ENCODE measurements at regions of chr3 and their contacts with region 1.

Region 1: DNA sequence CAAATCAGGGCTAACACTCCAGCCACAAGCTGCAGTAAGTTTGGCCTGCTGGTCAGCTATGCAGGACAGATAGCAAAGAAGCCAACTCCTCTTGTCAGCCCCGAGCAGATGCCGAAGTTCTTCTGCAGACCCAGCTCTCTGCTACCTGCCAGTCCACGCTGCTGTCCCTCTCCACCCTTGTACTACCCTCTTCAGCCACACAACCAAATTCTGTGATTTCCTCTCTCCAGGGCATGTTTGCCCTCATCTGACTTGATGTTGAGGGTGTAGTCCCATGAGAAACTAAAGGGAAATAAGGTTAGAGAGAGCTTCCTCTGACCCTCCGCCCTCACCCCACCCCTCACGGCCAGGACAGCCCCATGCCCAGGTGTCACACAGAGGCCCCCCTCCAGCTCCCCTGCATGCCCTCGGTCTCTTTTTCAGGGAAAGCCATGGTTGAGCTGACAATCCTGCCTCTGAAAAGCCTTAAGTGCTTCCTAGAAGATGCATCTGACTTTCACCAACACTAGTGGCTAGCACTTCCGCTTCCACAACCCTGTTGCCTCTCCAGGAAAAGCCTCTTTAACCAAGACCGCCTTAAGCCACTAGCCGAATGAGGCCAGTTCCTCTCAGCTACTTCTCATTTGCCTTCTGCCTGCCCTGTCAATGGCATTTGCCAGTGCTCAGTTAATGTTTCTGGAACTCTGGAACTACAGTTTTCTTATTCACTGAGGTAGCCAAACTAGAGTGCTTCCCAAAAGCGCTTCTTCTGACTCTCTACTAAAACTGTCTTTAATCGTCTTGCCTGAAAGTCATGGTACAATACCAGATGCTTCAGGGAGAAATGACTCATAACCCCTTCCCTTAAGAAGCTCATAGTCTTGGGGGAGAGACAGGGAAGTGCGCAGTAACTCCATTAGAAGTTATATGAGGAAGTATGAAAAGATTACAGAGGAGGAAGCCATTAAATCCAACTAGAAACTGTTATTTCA is 300.4 kb upstream of the STT3B start:
- DNase-seq: no peak
- H3K4me3 Mint-ChIP-seq: no peak overlapping the region
- H3K27ac Mint-ChIP-seq: peak overlapping the region; percentile 1
- H3K4me1 Mint-ChIP-seq: peaks cover 56% of the 10 kb centered on the region
- H3K27me3 Mint-ChIP-seq: no peaks in the 10 kb centered on the region

Region 2: GRCh38 chr3:31213869-31214486 is 18.4 kb before region 1 on chr3:
- intact Hi-C with region 1: loop called (anchors 2 kb)
- DNase-seq: peak; percentile 86
- H3K4me3 Mint-ChIP-seq: peak overlapping the region; percentile 71
- H3K27ac Mint-ChIP-seq: peak overlapping the region; percentile 75
- H3K4me1 Mint-ChIP-seq: peaks cover 71% of the 10 kb centered on the region
- H3K27me3 Mint-ChIP-seq: no peaks in the 10 kb centered on the region

Region 3: GRCh38 chr3:31219131-31219843 is 13.1 kb before region 1 on chr3:
- intact Hi-C with region 1: loop called (anchors 1 kb)
- DNase-seq: no peak
- H3K4me3 Mint-ChIP-seq: no peak overlapping the region
- H3K27ac Mint-ChIP-seq: no peak overlapping the region
- H3K4me1 Mint-ChIP-seq: peaks cover 74% of the 10 kb centered on the region
- H3K27me3 Mint-ChIP-seq: no peaks in the 10 kb centered on the region

Region 4: DNA sequence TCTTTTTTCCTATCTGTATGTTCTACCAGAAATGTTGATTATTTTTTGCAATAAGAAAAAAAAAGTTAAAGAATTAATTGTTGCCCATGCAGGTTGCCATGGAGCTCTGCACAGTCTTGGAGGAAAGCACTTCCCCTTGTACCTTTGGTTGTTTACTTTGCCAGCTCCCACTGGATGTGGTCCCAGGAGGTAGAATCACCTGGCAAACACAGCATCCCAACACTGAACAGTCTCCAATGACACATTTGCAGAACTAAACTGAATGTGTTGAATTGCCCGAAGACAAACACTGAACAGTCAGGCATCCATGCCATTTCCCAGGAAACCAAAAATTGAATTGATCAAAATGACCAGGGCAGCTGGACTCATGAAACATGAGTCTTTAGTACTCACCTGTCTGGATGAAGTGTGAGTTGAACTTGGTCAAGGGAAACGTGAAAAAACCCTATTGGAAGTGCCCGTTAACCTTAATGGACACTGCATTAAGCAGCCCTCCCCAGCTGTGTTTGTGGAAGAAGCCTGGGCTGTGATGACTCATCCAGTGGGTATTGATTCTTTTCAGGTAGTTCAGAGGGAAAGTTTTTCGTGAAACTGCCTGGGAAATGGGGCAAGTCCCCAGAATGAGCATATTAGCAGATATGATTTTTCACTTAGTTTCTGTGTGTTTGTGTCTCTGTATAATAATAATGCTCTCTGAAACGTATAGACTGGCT is 15.7 kb after region 1 on chr3:
- intact Hi-C with region 1: loop called (anchors 1 kb)
- DNase-seq: no peak
- H3K4me3 Mint-ChIP-seq: no peak overlapping the region
- H3K27ac Mint-ChIP-seq: peak overlapping the region; percentile 31
- H3K4me1 Mint-ChIP-seq: peaks cover 48% of the 10 kb centered on the region
- H3K27me3 Mint-ChIP-seq: no peaks in the 10 kb centered on the region

Measured in activated CD4-positive, alpha-beta T cell treated with anti-CD3 and anti-CD28 coated beads, Interleukin-2, amount 10 ng/mL, durations not matched to agents 24 days and 14 days (primary cell).